Right ventricle myocardium inferior (tissue), 1 donor: ENCODE measurements at regions of chr16 and their contacts with region 1.

Region 1: DNA sequence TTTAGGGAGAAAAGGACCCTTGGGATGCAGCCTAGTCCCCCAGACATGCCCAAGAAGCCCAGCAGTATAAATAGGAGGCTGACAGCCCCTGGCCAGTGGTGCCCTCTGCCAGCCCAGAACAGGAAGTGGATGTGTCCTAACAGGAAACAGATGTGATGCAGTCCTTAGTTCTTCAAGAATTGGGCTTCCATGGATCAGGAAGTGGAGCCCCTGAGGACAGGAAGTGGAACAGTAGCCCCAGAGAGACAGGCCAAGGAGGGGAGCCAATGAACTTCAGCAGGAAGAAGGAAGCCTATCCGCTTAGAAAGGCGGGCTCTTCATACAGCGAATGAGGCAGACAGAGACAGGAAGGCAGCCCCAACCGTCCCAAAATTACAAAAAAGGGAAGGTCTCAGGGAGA is 7.2 kb downstream of the CTF1 start:
- DNase-seq: no peak
- ATAC-seq: peak; percentile 40

Region 2: DNA sequence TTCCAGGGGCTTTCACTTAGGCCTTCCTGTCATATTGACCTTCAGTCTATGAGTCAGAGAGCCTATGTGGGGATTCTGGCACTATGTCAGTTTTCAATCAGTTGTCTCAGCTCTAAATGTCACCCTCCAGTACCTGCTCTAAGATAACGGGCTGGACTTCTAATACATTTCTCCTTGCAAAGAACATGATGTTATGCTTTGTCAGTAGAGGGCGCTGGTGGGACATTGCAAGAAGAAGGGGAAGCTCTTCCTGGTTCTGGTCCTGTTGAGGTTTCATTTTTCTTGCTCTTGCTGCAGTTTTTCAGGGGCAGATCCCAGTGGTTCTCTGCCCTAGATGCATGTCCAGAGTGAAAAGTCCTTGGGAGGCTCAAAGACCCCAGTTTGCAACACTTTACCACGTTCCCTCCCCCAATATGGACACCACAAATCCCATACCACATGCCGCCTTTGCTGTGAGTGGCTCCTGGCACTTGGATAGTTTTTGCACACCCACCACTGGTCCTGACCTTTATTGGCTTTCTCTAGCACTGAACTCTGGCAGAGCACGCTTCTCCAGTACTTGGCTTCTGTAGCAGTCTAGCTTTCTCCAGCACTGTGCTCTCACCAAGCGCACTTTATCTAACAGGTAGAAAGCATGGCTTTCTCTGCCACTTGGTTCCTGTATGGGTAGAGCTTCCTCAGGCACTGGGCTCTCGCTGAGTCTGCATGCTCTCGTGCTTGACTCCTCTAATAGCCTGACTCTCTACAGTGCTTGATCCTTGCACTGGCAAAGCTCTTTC is 58.7 kb before region 1 on chr16:
- intact Hi-C with region 1: loop called (anchors 1 kb)
- DNase-seq: no peak
- ATAC-seq: peak; percentile 89

Region 3: DNA sequence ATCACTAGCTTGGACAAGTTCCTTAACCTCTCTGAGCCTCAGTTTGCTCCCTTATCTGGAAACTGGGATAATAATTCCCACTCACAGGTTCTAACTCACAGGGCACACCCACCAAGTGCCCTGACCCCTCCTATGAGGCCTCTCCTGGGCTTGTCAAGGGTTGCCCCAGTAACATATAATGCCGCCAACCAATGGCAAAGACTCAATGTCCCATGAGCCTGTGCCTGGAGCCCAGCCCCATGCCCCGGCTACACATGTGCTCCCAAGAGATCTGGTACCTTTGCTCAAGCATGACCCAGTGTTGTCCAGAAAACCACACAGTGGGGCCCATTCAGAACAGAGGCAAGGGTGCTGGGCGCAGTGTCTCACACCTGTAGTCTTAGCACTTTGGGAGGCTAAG is 11.2 kb after region 1 on chr16:
- intact Hi-C with region 1: no loop called
- DNase-seq: no peak
- ATAC-seq: no peak

Region 4: DNA sequence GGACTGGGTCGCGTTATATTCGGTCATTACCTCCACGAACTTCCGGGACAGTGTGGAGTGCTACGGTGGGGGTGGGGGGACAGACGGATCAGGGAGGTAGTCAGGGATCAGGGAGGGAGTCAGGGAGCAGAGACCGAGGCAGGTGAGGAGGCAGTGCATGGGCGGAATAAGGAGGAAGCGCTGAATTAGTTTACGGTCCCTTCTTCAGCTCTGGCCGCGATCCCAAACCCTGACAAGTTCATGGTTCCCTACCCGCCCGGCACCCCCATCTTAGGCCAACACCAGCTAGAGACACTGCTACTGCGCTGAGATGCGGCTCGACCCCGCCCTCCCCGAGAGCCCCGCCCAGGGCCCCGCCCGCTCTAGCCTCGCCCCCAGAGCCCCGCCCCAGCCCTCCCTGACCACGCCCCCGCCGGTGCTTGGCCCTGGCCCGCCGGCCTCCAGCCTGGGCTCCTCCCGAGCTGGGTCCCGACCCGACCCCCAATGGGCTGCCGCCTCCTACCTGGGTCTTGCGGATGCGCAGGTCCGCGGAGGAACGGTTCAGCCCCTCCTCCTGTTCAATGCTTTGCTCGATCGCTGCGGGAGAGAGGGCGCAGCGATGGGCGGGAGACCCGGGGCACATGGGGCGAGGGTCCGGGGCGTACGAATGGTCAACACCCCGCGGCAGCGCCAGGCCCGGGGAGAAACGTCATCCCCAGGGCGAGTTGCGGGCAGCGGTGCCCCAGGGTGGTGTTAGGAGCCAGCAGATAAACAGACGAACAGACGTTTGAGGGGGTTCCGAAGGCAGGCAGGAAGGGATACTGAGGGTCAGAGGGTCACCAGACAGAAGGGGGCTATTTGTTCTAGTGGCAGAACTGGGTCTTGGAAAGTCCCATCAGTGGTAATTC is 93.6 kb after region 1 on chr16:
- intact Hi-C with region 1: no loop called
- DNase-seq: peak; percentile 92
- ATAC-seq: peak; percentile 97